ENCODE measurements at regions of chr17 and their contacts with region 1.

Region 1: GRCh38 chr17:74457146-74457819 is 9.2 kb upstream of the CD300A start:
- DNase-seq: peak; percentile 72 to 82
- ATAC-seq: peak; percentile 32 to 59; a peak in 4 of 6 replicates
- H3K4me3 ChIP-seq: no peak overlapping the region
- H3K27ac ChIP-seq: peak overlapping the region in 1 of 2 experiments; percentile 59; a peak in 3 of 6 replicates
- H3K4me1 ChIP-seq: peaks cover 16% of the 10 kb centered on the region
- CTCF ChIP-seq: peak; percentile 99
- EP300 ChIP-seq: no peak
- POLR2A ChIP-seq: no peak
- RAD21 ChIP-seq: peak; percentile 100

Region 2: GRCh38 chr17:74296548-74296936 is 160.7 kb before region 1 on chr17:
- CTCF ChIA-PET with region 1: interaction called, 13 read pairs
- POLR2A ChIA-PET with region 1: no interaction called
- DNase-seq: peak; percentile 60 to 73
- ATAC-seq: peak; percentile 87
- H3K4me3 ChIP-seq: no peak overlapping the region
- H3K27ac ChIP-seq: no peak overlapping the region
- H3K4me1 ChIP-seq: peaks cover 7% of the 10 kb centered on the region; the same call in 2 of the 3 replicates
- CTCF ChIP-seq: peak; percentile 53
- EP300 ChIP-seq: no peak
- POLR2A ChIP-seq: no peak
- RAD21 ChIP-seq: peak; percentile 31 to 48; a peak in 3 of 5 replicates

Region 3: GRCh38 chr17:74361230-74362068 is 95.8 kb before region 1 on chr17 and contains the start of gene BTBD17:
- CTCF ChIA-PET with region 1: interaction called, 13 read pairs
- POLR2A ChIA-PET with region 1: no interaction called
- DNase-seq: peak; percentile 67 to 74
- ATAC-seq: peak; percentile 78 to 94
- H3K4me3 ChIP-seq: no peak within 1 kb of the TSS
- H3K27ac ChIP-seq: no peak within 1 kb of the TSS
- H3K4me1 ChIP-seq: peaks cover 8% of the 10 kb centered on the region; the same call in 1 of the 3 replicates
- CTCF ChIP-seq: peak; percentile 66
- EP300 ChIP-seq: no peak
- POLR2A ChIP-seq: no peak
- RAD21 ChIP-seq: peak; percentile 58 to 63
- polyA plus RNA-seq, gene BTBD17: not detected in 2 replicates

Region 4: DNA sequence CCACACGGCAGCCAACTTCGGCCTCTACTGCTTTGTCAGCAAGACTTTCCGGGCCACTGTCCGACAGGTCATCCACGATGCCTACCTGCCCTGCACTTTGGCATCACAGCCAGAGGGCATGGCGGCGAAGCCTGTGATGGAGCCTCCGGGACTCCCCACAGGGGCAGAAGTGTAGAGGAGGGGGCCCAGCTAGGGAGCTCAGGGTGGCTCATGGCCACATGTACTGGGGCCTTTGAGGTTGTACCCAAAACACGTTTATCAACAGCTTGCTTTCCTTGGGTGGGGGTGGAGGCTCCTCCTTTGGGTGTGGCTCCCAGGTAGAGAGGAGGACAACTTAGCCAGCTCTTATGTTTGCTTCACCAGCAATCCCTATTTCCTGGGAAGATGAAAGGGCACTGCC is 84.9 kb before region 1 on chr17:
- CTCF ChIA-PET with region 1: no interaction called
- POLR2A ChIA-PET with region 1: no interaction called
- DNase-seq: no peak
- ATAC-seq: no peak
- H3K4me3 ChIP-seq: no peak overlapping the region
- H3K27ac ChIP-seq: no peak overlapping the region
- H3K4me1 ChIP-seq: peaks cover 13% of the 10 kb centered on the region; the same call in 2 of the 3 replicates
- CTCF ChIP-seq: no peak
- EP300 ChIP-seq: no peak
- POLR2A ChIP-seq: no peak
- RAD21 ChIP-seq: no peak

Region 5: DNA sequence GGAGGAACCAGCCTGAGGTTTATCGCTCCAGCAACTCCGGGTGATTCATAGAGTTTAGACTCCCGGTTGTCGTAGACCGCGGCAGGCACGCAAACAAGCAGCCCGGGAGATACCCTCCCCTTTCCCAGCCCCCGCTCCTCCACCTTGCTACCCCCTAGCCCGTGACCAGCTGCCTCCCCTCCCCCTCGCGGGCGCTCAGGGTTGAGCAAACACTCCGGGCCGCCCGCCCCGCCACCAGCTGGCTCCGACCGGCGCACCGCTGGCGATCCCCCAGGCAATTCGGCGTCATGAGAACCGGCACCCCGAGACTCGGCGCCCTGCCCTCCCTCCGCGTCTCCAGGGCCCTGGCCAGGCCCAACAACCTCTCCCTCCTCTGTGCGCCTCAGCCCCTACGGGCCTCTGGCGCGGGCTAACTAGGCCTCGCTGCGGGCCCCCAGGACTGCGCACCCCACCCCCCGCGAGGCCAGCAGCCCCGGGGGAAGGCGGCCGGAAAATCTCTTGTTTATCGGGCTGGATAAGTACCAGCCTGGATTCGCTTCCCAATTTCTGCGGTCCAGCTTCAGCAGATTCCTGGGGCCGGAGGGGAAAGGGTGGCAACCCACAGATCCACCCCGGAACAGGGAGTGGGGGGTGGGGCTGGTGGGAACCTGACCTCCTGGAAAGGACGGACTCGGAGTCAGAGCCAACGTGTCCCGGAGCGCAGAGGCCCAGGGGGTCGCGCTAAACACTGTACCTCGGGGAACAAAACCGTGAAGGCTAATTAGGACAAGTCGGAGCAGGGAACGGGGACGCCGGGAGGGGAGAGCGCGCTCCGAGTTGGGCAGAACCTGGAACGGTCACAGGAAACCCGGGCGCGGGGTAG is 26.3 kb before region 1 on chr17:
- CTCF ChIA-PET with region 1: interaction called, 85 read pairs
- POLR2A ChIA-PET with region 1: interaction called, 16 read pairs
- DNase-seq: peak; percentile 91 to 97
- ATAC-seq: peak; percentile 66 to 84
- H3K4me3 ChIP-seq: peak overlapping the region; percentile 78
- H3K27ac ChIP-seq: peak overlapping the region; percentile 95 to 99
- H3K4me1 ChIP-seq: peaks cover 42% of the 10 kb centered on the region
- CTCF ChIP-seq: no peak
- EP300 ChIP-seq: peak; percentile 39 to 71; a peak in 2 of 5 replicates
- POLR2A ChIP-seq: peak; percentile 9
- RAD21 ChIP-seq: no peak

Region 6: DNA sequence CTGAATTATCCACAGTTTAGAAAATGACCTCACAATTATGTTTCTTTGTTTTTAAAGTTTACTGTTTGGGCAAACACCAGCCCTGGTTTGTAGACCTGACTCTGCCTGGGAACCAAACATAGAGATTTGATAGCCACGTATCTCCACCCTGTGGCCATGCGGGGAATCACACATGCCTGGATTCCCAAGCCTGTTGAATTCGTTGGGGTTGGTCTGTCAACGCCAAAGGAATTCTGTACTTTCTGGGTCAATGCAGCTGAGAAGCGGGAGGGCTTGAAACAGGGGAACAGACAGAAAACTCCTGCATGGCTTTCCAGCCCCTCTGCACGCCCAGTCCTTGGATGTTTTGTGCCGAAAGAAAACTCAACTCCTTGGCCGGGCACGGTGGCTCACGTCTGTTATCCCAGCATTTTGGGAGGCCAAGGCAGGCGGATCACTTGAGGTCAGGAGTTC is 36.1 kb after region 1 on chr17:
- CTCF ChIA-PET with region 1: interaction called, 36 read pairs
- POLR2A ChIA-PET with region 1: no interaction called
- DNase-seq: peak; percentile 75 to 86
- ATAC-seq: peak; percentile 97 to 98
- H3K4me3 ChIP-seq: no peak overlapping the region
- H3K27ac ChIP-seq: no peak overlapping the region
- H3K4me1 ChIP-seq: no peaks in the 10 kb centered on the region
- CTCF ChIP-seq: peak; percentile 90
- EP300 ChIP-seq: no peak
- POLR2A ChIP-seq: no peak
- RAD21 ChIP-seq: peak; percentile 92 to 97

Region 7: DNA sequence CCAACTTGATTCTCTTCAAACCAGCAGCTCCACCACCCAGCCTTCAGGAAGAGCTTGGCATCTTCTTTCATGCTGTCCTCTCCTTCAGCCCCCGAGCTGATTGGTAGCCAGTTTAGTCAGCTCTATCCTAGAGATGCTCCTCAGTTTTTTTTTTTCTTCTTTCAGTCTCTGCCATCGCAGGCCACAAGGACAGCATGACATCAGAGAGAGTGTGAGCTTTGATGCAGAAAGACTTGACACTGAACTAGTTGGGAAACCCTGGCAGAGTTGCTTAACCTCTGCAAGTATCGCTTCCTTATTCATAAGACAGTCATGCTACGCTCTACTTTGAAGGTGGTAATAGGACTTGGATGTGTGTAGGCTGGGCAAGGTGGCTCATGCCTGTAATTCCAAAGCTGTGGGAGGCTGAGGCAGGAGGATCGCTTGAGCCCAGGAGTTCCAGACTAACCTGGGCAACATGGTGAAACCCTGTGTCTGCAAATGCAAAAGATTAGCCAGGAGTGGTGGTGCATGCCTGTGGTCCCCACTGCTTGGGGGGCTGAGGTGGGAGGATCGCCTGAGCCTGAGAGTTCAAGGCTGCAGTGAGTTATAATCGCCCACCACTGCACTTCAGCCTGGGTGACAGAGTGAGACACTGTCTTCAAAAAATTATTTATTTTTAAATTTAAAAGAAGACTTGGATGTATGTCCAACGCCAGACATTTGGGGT is 71.4 kb after region 1 on chr17:
- CTCF ChIA-PET with region 1: interaction called, 15 read pairs
- POLR2A ChIA-PET with region 1: no interaction called
- DNase-seq: no peak
- ATAC-seq: no peak
- H3K4me3 ChIP-seq: no peak overlapping the region
- H3K27ac ChIP-seq: no peak overlapping the region
- H3K4me1 ChIP-seq: no peaks in the 10 kb centered on the region
- CTCF ChIP-seq: no peak
- EP300 ChIP-seq: no peak
- POLR2A ChIP-seq: no peak
- RAD21 ChIP-seq: no peak